Heart left ventricle (tissue), 16 donors: ENCODE measurements at regions of chr6 and their contacts with region 1.

Region 1: DNA sequence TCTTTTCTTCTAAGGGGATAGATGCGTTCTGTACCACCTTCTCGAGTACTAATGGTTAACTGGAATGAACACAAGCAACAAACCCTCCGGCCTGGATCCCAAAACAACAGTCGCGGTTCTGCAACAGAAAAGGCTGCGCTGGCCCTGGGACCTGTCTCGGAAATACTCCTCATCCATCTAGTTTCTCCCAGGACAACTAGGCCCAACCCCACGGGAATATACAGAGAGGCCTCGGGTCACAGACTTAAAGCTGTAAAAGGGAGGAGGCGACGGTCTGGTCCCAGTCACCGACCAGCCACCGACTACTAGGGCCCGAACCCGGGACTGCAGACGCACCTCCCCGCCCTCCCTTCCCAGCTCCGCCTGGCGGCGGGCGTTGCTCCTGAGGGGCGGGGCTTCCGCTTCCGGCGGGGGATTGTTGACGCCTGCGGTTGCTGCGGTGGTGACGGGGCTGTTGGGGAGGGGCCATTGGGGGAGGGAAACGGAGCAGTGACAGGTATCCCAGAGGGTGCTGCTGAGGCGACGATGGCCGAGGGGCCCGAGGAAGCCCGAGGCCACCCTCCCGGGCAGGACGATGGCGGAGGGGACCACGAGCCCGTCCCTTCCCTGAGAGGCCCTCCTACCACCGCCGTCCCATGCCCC is at the start of gene FAM8A1:
- DNase-seq: peak; percentile 96 to 98 (median 97)
- ATAC-seq: peak; percentile 97 to 99 (median 99)
- H3K4me3 ChIP-seq: peak within 1 kb of the TSS; percentile 75 to 99 (median 94)
- H3K27ac ChIP-seq: peak within 1 kb of the TSS; percentile 80 to 98 (median 95)
- H3K4me1 ChIP-seq: peaks cover 0 to 20% (median 13%) of the 10 kb centered on the region in 12 donors
- H3K27me3 ChIP-seq: no peaks in the 10 kb centered on the region
- CTCF ChIP-seq: peak; percentile 37 to 75 (median 53)
- POLR2A ChIP-seq: peak in 1 of 2 donors; percentile 80
- total RNA-seq, gene FAM8A1: 14.9 to 24.5 (median 17.5) TPM

Region 2: DNA sequence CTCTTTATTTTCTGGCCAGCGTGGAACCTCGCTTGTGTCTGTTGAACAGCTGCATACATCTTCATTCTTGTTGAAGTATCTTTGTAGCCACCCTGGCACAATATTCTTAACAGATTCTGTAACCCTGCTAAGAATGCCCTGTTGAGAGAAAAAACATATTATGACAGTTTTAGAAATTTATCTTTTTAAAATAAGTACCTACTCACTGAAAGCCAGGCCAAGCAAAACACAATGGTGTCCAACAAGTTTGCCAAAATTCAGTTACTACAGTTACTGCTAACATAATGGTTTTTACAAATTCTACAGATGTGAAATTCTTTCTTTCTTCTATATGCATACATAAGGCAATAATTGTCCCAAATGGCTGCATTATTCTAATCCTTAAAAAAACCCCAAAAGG is 88.5 kb after region 1 on chr6:
- intact Hi-C with region 1: loop called in 1 of 10 experiments (anchors 5 kb)
- DNase-seq: no peak
- ATAC-seq: no peak
- H3K4me3 ChIP-seq: no peak overlapping the region
- H3K27ac ChIP-seq: no peak overlapping the region
- H3K4me1 ChIP-seq: peaks cover 0 to 29% (median 7%) of the 10 kb centered on the region in 12 donors
- H3K27me3 ChIP-seq: no peaks in the 10 kb centered on the region
- CTCF ChIP-seq: no peak
- POLR2A ChIP-seq: no peak

Region 3: DNA sequence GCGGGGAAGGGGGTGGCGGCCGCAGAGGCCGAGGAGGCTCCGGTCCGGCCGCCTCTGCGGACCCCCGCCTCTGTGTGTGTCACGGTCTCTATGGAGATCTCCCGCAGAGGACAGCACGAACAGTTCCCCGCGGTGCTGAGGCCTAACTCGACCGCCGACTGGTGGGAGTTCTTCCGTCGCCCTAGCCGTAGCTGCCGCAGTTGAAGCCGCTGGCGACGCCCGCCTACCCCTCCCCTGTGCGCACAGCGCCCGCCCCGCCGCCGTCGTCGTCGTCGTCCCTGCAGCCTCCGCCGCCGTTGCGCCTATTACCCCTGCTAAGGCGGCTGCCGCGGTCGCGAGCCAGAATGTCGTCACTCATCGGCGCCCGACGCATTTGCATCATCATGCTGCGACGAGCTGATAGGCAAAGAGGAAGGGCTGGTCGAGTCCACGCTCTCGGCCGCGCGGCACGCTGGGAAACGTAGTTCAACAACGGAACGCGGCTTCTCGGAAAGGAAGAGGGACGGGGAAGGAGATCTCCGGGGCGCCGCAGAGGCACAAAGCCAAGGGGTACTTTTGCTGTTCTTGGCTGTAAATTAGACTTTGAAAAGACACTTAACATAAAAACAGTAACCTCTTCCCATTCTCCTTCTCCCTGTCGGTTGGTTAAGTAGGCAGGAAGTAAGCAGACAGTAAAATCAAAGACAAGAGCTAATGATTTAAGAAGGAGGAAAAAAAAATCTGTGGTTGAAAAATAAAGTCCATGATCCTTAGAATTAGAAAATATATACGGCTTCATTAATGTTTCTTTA is 106.8 kb after region 1 on chr6 and contains the start of gene NUP153:
- intact Hi-C with region 1: loop called in 5 of 10 experiments (anchors 2 to 10 kb)
- DNase-seq: peak; percentile 98 to 99 (median 99)
- ATAC-seq: peak; percentile 86 to 92 (median 86)
- H3K4me3 ChIP-seq: peak within 1 kb of the TSS; percentile 60 to 100 (median 87)
- H3K27ac ChIP-seq: peak within 1 kb of the TSS; percentile 94 to 100 (median 96)
- H3K4me1 ChIP-seq: peaks cover 7 to 43% (median 32%) of the 10 kb centered on the region in 12 donors
- H3K27me3 ChIP-seq: no peaks in the 10 kb centered on the region
- CTCF ChIP-seq: peak in 1 of 12 donors; percentile 10
- POLR2A ChIP-seq: peak; percentile 19 to 92
- total RNA-seq, gene NUP153: 19.5 to 31.7 (median 28.1) TPM

Region 4: DNA sequence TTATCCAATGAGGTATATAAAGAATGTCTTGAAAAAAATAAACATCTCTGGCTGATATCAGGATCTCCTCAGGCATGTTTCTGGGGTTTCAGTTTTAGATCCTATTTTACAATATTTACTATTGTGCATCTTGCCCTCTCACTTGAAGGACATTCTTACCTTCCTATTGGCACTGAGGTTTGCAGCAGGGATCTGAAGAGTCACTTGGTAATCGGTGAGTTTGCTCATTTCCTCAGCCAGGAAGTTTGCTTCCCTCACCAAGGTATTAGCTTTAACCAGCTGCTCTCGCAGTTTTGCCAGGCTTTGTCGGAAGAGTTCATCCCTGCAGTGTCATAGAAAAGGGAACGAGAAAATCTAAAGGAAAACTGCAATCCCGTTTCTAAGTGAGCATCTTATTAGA is 208.6 kb after region 1 on chr6:
- intact Hi-C with region 1: loop called in 1 of 10 experiments (anchors 10 kb)
- DNase-seq: no peak
- ATAC-seq: no peak
- H3K4me3 ChIP-seq: no peak overlapping the region
- H3K27ac ChIP-seq: no peak overlapping the region
- H3K4me1 ChIP-seq: peaks cover 0 to 6% (median 0%) of the 10 kb centered on the region in 12 donors
- H3K27me3 ChIP-seq: no peaks in the 10 kb centered on the region
- CTCF ChIP-seq: no peak
- POLR2A ChIP-seq: no peak